Common myeloid progenitor, CD34-positive (primary cell): ENCODE measurements at regions of chr1 and their contacts with region 1.

Region 1: DNA sequence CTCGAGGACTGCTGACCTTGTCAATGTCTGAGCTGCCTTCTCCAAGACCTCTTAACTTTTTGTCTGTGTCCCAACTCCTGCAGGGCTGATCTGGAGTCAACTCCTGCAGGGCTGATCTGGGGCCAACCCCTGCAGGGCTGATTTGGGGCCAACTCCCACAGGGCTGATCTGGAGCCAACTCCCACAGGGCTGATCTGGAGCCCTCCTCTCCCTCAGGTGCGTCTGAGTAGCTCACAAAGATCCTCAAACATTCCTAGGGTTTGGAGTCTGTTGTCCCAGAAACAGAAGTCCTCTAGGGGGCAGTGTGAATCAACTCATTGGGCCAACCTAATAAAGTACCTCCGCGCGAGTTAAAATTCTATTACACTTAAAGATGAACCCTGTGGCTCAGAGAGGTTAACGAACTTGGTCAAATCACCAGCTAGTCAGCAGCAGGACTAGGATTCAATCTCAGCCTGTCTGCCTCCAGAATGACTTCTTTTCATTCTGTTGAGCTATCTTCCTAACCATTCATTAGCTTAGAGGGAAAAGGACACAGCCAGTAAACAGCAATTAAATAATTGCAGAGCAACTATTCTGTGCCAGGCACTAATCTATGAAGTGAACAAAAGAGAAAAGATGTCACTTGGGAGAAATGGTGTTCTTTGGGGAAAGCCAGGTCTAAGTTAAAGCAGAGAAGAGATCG is 17.2 kb upstream of the RLF start:
- DNase-seq: peak; percentile 75 to 82 (median 78)
- H3K4me3 ChIP-seq: no peak overlapping the region
- H3K27ac ChIP-seq: no peak overlapping the region
- H3K4me1 ChIP-seq: no peaks in the 10 kb centered on the region
- H3K27me3 ChIP-seq: peaks cover 0 to 7% (median 2%) of the 10 kb centered on the region in 5 experiments

Region 2: DNA sequence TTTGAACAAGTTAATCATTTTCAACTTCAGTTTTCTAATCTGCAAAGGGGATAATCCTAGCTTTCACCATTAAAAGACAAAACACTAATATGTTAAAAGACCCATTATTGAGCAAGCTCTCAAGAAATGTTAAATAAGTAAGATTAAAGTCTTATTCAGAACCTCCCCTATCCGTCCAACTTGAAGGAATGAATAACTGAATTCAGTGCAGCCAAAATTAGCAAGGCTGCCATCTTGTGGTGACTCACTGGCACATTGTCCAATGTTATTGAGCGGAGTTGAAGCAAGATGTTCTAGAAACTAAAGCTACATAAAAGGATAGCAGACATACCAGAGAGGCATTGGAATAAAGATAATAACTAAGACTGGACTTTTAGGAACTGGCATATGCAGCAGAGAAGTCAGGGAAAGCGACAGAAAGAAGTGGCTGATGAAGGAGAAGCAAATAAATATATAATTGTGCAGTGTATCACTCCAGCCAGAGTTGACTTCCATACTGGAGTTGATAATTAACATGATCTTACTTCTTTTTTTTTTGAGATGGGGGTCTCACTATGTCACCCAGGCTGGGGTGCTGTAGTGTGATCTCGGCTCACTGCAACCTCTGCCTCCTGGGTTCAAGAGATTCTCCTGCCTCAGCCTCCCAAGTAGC is 111.7 kb before region 1 on chr1:
- CTCF ChIA-PET with region 1: no interaction called
- POLR2A ChIA-PET with region 1: no interaction called
- DNase-seq: peak; percentile 65 to 78 (median 78)
- H3K4me3 ChIP-seq: no peak overlapping the region
- H3K27ac ChIP-seq: no peak overlapping the region
- H3K4me1 ChIP-seq: peaks cover 31 to 62% (median 54%) of the 10 kb centered on the region in 4 experiments
- H3K27me3 ChIP-seq: no peaks in the 10 kb centered on the region

Region 3: DNA sequence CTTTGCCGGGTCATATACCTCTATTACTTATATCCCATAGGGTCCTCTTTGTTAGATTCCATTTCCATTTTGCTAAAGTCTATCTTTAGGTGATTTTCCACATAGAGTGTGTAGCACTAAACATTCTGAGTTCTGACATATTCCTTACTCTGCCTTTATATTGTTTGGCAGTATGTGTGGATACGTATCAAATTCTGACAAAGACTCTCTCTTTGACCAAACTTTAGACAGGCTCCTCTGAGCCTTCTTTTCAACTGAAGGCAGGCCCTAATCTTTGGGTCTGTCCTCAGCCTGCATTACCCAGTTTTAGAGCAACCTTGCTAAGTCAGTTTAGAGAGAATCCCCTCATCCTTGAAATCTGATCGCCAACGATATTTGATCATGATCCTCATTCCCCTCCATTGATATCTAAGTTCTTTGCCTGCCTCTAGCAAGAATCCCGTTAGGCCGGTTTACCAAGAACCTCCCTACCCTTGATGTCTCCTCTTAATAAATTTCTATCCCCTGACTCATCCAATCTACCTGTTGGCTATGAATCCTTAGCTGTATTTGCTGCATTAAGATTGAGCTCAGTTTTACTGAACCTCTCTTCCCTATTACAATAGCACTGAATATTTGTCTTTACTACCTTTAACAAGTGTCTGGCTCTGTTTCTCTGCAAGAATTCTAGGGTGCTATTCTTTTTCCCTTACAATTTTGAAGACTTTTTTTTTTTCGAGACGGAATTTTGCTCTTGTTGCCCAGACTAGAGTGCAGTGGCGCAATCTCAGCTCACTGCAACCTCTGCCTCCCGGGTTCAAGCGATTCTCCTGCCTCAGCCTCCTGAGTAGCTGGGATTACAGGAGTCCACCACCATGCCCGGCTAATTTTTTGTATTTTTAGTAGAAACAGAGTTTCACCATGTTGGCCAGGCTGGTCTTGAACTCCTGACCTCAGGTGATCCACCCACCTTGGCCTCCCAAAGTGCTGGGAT is 36.5 kb before region 1 on chr1:
- CTCF ChIA-PET with region 1: no interaction called
- POLR2A ChIA-PET with region 1: no interaction called
- DNase-seq: no peak
- H3K4me3 ChIP-seq: no peak overlapping the region
- H3K27ac ChIP-seq: no peak overlapping the region
- H3K4me1 ChIP-seq: no peaks in the 10 kb centered on the region
- H3K27me3 ChIP-seq: no peaks in the 10 kb centered on the region

Region 4: DNA sequence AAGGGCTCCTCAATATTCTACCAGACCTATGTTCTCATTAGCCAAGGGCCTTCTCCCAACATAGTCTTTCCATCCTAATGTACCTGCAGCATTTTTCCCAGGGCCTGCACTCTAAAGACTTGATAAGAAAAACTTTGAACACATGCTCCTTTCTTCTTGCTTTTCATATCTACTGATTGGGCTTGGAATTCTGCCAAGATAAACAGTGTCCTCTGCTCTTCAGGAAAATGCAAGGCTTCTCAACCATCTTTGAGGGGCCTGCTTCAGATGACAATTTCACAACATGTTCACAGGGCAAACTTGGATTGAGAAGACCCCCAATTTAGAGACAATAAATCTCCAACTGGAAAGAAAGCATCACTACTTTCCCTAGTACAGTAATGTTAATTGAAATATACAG is 21.2 kb before region 1 on chr1:
- CTCF ChIA-PET with region 1: no interaction called
- POLR2A ChIA-PET with region 1: no interaction called
- DNase-seq: no peak
- H3K4me3 ChIP-seq: no peak overlapping the region
- H3K27ac ChIP-seq: no peak overlapping the region
- H3K4me1 ChIP-seq: no peaks in the 10 kb centered on the region
- H3K27me3 ChIP-seq: no peaks in the 10 kb centered on the region

Region 5: GRCh38 chr1:40183055-40183710 is 39.1 kb after region 1 on chr1:
- CTCF ChIA-PET with region 1: interaction called, 26 read pairs
- POLR2A ChIA-PET with region 1: no interaction called
- DNase-seq: peak; percentile 67 to 79 (median 77)
- H3K4me3 ChIP-seq: no peak overlapping the region
- H3K27ac ChIP-seq: no peak overlapping the region
- H3K4me1 ChIP-seq: peaks cover 0 to 3% (median 3%) of the 10 kb centered on the region in 4 experiments
- H3K27me3 ChIP-seq: no peaks in the 10 kb centered on the region

Region 6: GRCh38 chr1:40226192-40226591 is 82.2 kb after region 1 on chr1:
- CTCF ChIA-PET with region 1: interaction called, 13 read pairs
- POLR2A ChIA-PET with region 1: no interaction called
- DNase-seq: no peak
- H3K4me3 ChIP-seq: no peak overlapping the region
- H3K27ac ChIP-seq: no peak overlapping the region
- H3K4me1 ChIP-seq: no peaks in the 10 kb centered on the region
- H3K27me3 ChIP-seq: no peaks in the 10 kb centered on the region

Region 7: DNA sequence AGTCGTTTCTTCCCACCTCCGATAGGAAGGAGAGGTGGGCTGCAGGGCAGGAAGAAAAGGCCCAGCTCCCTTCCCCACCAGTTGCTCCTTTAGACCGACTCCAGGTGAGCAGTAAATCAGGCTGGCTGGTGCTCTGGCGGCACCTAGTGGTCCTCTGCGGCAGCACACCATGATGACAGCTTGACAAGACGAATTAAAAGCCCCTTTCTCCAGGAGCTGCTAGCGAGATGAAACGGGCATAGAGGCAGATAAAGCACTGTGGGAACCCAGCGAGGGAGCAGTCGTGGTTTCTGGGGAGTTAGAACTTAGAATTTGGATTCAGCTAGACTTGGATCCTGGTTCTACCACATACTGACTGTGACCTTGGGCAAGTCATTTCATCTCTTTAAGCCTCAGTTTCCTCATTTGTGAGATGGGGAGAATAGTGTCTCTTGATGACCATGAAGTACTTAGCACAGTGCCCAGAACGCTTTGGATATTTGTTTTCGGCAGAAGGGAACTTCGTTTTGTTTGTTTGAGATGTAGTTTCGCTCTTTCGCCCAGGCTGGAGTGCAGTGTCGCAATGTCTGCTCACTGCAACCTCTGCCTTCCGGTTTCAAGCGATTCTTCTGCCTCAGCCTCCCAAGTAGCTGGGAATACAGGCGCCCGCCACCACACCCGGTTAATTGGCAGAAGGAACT is 194.9 kb after region 1 on chr1:
- CTCF ChIA-PET with region 1: interaction called, 28 read pairs
- POLR2A ChIA-PET with region 1: no interaction called
- DNase-seq: peak; percentile 84 to 92 (median 89)
- H3K4me3 ChIP-seq: peak overlapping the region in 2 of 7 experiments; percentile 52 to 55
- H3K27ac ChIP-seq: no peak overlapping the region
- H3K4me1 ChIP-seq: peaks cover 0 to 21% (median 8%) of the 10 kb centered on the region in 4 experiments
- H3K27me3 ChIP-seq: no peaks in the 10 kb centered on the region

Region 8: DNA sequence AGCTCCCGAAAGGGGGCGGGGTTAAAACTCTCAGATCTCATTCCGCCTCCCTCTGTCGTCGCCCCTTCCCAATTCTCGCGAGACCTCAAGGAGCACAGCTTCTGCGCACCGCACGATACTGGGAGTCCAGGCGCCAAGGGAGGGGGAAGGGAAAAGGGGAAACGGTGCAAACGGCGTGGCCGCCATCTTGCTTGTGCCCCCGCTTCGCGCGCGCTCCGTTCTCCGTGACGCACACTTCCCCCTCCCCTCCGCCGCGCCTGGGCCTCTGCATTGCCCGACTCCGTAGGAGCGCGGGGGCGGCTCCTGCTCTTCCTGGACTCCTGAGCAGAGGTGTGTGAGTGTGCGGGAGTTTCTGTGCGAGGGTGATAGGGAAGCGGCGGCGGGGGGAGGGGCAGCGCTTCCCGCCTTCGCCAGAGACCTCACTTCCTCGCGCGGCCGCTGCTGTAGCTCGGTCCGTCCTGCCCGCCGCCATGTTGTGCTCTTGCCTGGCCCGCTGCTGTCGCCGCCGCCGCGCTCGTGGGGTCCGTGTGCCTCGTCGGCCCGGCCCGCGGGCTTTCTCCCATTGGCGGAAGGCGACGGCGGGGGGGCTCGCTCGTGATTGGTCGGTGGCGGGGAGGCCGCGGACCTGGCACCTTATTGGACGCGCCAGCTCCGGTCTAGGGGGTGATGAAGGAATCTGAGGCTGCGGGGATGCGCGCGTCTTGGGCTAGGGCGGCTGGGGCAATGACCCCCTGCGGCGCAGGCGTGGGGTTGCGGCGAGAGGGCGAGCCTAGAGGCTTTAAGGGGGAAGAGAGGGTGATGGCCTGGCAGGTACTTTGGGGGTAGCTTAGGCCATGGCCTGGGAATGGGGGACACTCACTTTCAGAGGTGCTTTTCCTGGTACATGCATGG is 547.8 kb after region 1 on chr1 and contains the start of gene NFYC:
- CTCF ChIA-PET with region 1: no interaction called
- POLR2A ChIA-PET with region 1: no interaction called
- DNase-seq: peak; percentile 99 to 100 (median 99)
- H3K4me3 ChIP-seq: peak within 1 kb of the TSS; percentile 61 to 97 (median 85)
- H3K27ac ChIP-seq: peak within 1 kb of the TSS; percentile 95 to 98
- H3K4me1 ChIP-seq: peaks cover 17 to 36% (median 24%) of the 10 kb centered on the region in 4 experiments
- H3K27me3 ChIP-seq: no peaks in the 10 kb centered on the region